A673 (cell line): ENCODE measurements at regions of chr1 and their contacts with region 1.

Region 1: GRCh38 chr1:107047556-107047955 is 8.9 kb upstream of the PRMT6 start:
- DNase-seq: no peak
- H3K4me3 ChIP-seq: no peak overlapping the region
- H3K27ac ChIP-seq: no peak overlapping the region
- H3K4me1 ChIP-seq: no peaks in the 10 kb centered on the region
- H3K27me3 ChIP-seq: no peaks in the 10 kb centered on the region
- CTCF ChIP-seq: no peak

Region 2: DNA sequence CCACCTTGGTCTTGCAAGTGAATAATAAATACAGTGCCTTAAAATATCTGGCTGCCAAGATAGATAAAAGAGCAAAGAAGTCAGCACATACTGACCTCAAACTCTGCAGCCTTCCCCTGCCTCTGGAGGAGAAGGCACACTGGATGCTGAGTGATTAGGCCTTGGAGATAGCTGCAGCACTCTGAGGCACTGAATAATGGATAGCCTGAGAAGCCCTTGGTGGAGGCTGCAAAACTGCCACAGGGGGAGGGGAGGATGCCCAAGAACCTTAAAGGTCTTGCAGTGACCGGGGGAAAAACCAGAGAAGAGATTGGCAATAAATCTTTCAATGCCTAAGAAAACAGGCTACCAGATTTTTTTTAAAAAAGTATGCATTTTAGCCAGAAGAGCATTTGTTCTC is 158.5 kb before region 1 on chr1:
- CTCF ChIA-PET with region 1: no interaction called
- POLR2A ChIA-PET with region 1: no interaction called
- intact Hi-C with region 1: no loop called
- DNase-seq: no peak
- H3K4me3 ChIP-seq: no peak overlapping the region
- H3K27ac ChIP-seq: no peak overlapping the region
- H3K4me1 ChIP-seq: no peaks in the 10 kb centered on the region
- H3K27me3 ChIP-seq: no peaks in the 10 kb centered on the region
- CTCF ChIP-seq: no peak

Region 3: GRCh38 chr1:106937104-106937503 is 110.5 kb before region 1 on chr1:
- CTCF ChIA-PET with region 1: no interaction called
- POLR2A ChIA-PET with region 1: no interaction called
- intact Hi-C with region 1: no loop called
- DNase-seq: peak; percentile 72
- H3K4me3 ChIP-seq: no peak overlapping the region
- H3K27ac ChIP-seq: no peak overlapping the region
- H3K4me1 ChIP-seq: no peaks in the 10 kb centered on the region
- H3K27me3 ChIP-seq: no peaks in the 10 kb centered on the region
- CTCF ChIP-seq: no peak

Region 4: DNA sequence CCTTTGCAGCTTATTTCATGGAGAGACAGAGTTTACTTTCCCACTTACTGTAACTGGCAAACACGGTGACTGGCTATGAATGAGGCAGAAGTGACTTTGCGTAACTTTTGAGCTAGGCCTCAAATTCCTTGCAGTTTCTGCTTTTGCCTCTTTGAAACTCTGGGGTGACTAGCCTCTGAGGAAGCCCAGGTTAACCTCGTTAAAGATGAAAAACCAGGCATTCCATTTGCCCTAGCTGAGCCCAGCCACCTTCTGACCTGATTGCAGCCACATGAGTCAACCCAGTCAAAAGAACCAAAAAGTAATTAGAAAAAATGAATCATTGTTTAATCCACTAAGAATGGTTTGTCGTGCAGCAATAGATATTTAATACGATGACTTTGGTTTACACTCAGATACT is 29.3 kb after region 1 on chr1:
- CTCF ChIA-PET with region 1: no interaction called
- POLR2A ChIA-PET with region 1: no interaction called
- intact Hi-C with region 1: no loop called
- DNase-seq: no peak
- H3K4me3 ChIP-seq: no peak overlapping the region
- H3K27ac ChIP-seq: no peak overlapping the region
- H3K4me1 ChIP-seq: no peaks in the 10 kb centered on the region
- H3K27me3 ChIP-seq: no peaks in the 10 kb centered on the region
- CTCF ChIP-seq: no peak

Region 5: DNA sequence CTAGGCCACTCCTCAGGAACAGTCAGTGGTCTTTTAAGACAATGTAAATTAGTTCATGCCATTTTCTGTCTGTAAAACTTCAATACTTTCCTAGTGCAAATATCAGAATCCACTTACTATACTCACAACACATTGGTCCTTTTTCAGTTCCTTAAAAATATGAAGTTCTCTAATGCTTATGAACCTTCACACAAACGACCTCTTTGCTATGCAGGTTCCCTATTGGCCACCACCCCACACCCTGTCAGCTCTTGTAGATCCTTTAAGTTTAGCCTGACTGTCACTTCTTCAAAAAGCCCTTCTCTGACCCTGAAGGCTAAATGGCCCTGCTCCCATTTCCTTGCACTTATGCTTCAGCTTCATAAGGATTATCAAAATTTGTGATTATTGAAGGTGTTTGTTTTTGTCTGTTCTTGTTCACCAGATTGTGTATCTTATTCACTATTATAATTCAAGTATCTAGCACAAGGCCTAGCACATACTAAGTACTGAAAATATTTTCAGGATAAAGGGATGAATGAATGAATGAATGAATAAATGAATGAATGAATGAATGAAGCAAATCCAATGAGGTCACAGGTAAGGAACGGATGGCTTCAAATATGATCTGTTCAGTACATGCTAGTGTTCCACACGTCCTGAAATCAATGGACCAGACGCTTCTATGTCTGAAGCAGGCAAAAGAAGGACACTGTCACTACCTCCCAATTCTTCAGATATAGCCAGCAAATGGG is 543.5 kb after region 1 on chr1:
- CTCF ChIA-PET with region 1: no interaction called
- POLR2A ChIA-PET with region 1: no interaction called
- intact Hi-C with region 1: no loop called
- DNase-seq: no peak
- H3K4me3 ChIP-seq: no peak overlapping the region
- H3K27ac ChIP-seq: no peak overlapping the region
- H3K4me1 ChIP-seq: no peaks in the 10 kb centered on the region
- H3K27me3 ChIP-seq: no peaks in the 10 kb centered on the region
- CTCF ChIP-seq: no peak

Region 6: DNA sequence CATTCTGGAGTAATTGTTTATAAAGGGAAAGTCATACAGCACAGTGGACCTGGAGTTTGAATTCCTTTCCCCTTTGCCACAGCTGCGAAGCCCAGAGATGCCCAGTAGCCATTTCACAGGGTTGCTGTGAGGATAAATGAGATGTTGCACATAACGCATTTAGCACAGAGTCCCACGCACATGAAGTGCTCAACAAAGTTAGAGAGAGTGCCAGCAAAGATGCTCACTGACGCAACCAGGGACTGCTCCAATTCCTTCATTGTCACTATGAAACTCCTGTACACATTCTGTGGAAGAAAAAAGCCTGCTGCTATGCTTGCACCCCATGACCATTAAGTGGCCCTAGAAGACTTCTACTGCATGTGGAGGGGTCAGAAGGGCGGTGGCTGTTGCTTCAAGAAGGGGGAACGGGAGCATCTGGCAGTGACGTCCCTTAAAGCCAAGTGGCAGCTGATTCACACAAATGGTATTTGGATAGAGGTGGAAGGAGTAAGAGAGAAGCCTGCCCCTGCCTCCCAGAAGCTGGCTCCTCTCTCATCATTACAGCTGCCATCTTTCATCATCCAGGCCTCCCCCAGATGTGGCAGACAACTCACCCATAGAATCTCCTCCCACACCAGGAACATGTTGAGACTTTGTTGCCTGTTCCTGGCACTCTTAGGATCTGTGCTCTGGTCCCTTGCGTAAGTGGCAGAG is 944.0 kb after region 1 on chr1:
- CTCF ChIA-PET with region 1: interaction called, 22 read pairs
- POLR2A ChIA-PET with region 1: no interaction called
- intact Hi-C with region 1: no loop called
- DNase-seq: no peak
- H3K4me3 ChIP-seq: no peak overlapping the region
- H3K27ac ChIP-seq: no peak overlapping the region
- H3K4me1 ChIP-seq: no peaks in the 10 kb centered on the region
- H3K27me3 ChIP-seq: no peaks in the 10 kb centered on the region
- CTCF ChIP-seq: no peak